HepG2 (cell line): ENCODE measurements at regions of chr9 and their contacts with region 1.

Region 1: GRCh38 chr9:6827439-6827838 is 69.7 kb downstream of the KDM4C start:
- DNase-seq: peak; percentile 71
- ATAC-seq: peak; percentile 81
- H3K4me3 ChIP-seq: no peak overlapping the region
- H3K27ac ChIP-seq: no peak overlapping the region
- H3K4me1 ChIP-seq: peaks cover 10% of the 10 kb centered on the region
- H3K27me3 ChIP-seq: no peaks in the 10 kb centered on the region
- CTCF ChIP-seq: peak; percentile 79
- EP300 ChIP-seq: no peak
- POLR2A ChIP-seq: no peak
- RAD21 ChIP-seq: peak; percentile 61

Region 2: DNA sequence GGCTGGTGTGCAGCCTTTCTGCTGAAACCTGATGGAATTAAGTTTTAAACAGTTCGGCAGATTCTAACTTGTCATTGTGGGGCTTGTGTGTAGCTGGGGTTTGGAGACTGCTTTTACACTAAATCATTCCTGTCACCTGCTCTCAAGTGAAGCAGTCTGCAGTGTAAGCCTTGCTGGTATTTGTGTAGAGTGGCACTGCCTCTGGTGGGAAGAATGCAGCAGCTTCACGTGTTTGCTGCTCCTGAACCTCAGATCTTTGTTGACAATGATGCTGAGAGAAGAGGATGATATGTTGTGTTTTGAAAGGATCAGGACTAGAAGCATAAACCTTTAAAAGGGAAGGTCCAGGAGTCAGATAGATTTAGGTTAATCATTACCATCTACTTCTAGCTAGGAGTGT is 18.4 kb after region 1 on chr9:
- CTCF ChIA-PET with region 1: interaction called, 6 read pairs
- POLR2A ChIA-PET with region 1: no interaction called
- in situ Hi-C with region 1: no loop called
- intact Hi-C with region 1: loop called (anchors 1 kb)
- DNase-seq: peak; percentile 83
- ATAC-seq: peak; percentile 98
- H3K4me3 ChIP-seq: no peak overlapping the region
- H3K27ac ChIP-seq: peak overlapping the region; percentile 54
- H3K4me1 ChIP-seq: peaks cover 23% of the 10 kb centered on the region
- H3K27me3 ChIP-seq: no peaks in the 10 kb centered on the region
- CTCF ChIP-seq: peak; percentile 81
- EP300 ChIP-seq: peak in 1 of 2 experiments; percentile 29; a peak in 1 of 4 replicates
- POLR2A ChIP-seq: no peak
- RAD21 ChIP-seq: peak; percentile 59; the same call in 1 of the 2 replicates

Region 3: GRCh38 chr9:6907772-6908381 is 80.4 kb after region 1 on chr9:
- CTCF ChIA-PET with region 1: no interaction called
- POLR2A ChIA-PET with region 1: interaction called, 3 read pairs
- in situ Hi-C with region 1: no loop called
- intact Hi-C with region 1: loop called (anchors 2 kb)
- DNase-seq: peak; percentile 38
- ATAC-seq: peak; percentile 38; the same call in 1 of the 3 replicates
- H3K4me3 ChIP-seq: no peak overlapping the region
- H3K27ac ChIP-seq: peak overlapping the region; percentile 13
- H3K4me1 ChIP-seq: peaks cover 55% of the 10 kb centered on the region
- H3K27me3 ChIP-seq: no peaks in the 10 kb centered on the region
- CTCF ChIP-seq: peak; percentile 50
- EP300 ChIP-seq: no peak
- POLR2A ChIP-seq: no peak
- RAD21 ChIP-seq: no peak

Region 4: GRCh38 chr9:7053903-7054302 is 226.5 kb after region 1 on chr9:
- CTCF ChIA-PET with region 1: interaction called, 4 read pairs
- POLR2A ChIA-PET with region 1: no interaction called
- in situ Hi-C with region 1: no loop called
- intact Hi-C with region 1: loop called (anchors 5 kb)
- DNase-seq: no peak
- ATAC-seq: no peak
- H3K4me3 ChIP-seq: no peak overlapping the region
- H3K27ac ChIP-seq: no peak overlapping the region
- H3K4me1 ChIP-seq: no peaks in the 10 kb centered on the region
- H3K27me3 ChIP-seq: no peaks in the 10 kb centered on the region
- CTCF ChIP-seq: no peak
- EP300 ChIP-seq: no peak
- POLR2A ChIP-seq: no peak
- RAD21 ChIP-seq: no peak

Region 5: GRCh38 chr9:7186175-7186574 is 358.7 kb after region 1 on chr9:
- CTCF ChIA-PET with region 1: interaction called, 4 read pairs
- POLR2A ChIA-PET with region 1: no interaction called
- in situ Hi-C with region 1: loop called (anchors 25 kb)
- intact Hi-C with region 1: loop called (anchors 1 kb)
- DNase-seq: peak; percentile 16
- ATAC-seq: peak; percentile 60
- H3K4me3 ChIP-seq: no peak overlapping the region
- H3K27ac ChIP-seq: no peak overlapping the region
- H3K4me1 ChIP-seq: no peaks in the 10 kb centered on the region
- H3K27me3 ChIP-seq: no peaks in the 10 kb centered on the region
- CTCF ChIP-seq: peak; percentile 81
- EP300 ChIP-seq: no peak
- POLR2A ChIP-seq: no peak
- RAD21 ChIP-seq: no peak

Region 6: GRCh38 chr9:7520396-7520795 is 693.0 kb after region 1 on chr9:
- CTCF ChIA-PET with region 1: no interaction called
- POLR2A ChIA-PET with region 1: no interaction called
- in situ Hi-C with region 1: loop called (anchors 10 kb)
- intact Hi-C with region 1: no loop called
- DNase-seq: no peak
- ATAC-seq: no peak
- H3K4me3 ChIP-seq: no peak overlapping the region
- H3K27ac ChIP-seq: no peak overlapping the region
- H3K4me1 ChIP-seq: no peaks in the 10 kb centered on the region
- H3K27me3 ChIP-seq: no peaks in the 10 kb centered on the region
- CTCF ChIP-seq: no peak
- EP300 ChIP-seq: no peak
- POLR2A ChIP-seq: no peak
- RAD21 ChIP-seq: no peak

Region 7: GRCh38 chr9:7536310-7536939 is 709.0 kb after region 1 on chr9:
- CTCF ChIA-PET with region 1: no interaction called
- POLR2A ChIA-PET with region 1: no interaction called
- in situ Hi-C with region 1: no loop called
- intact Hi-C with region 1: loop called (anchors 5 kb)
- DNase-seq: peak; percentile 45
- ATAC-seq: peak; percentile 96
- H3K4me3 ChIP-seq: no peak overlapping the region
- H3K27ac ChIP-seq: no peak overlapping the region
- H3K4me1 ChIP-seq: no peaks in the 10 kb centered on the region
- H3K27me3 ChIP-seq: no peaks in the 10 kb centered on the region
- CTCF ChIP-seq: peak; percentile 84
- EP300 ChIP-seq: no peak
- POLR2A ChIP-seq: no peak
- RAD21 ChIP-seq: 0 out of 2 replicates have a peak, but pooled peaks have one; percentile 28